ENCODE measurements at regions of chr22 and their contacts with region 1.

Region 1: GRCh38 chr22:22884010-22884887 is 3.4 kb upstream of the IGLL5 start:
- DNase-seq: no peak
- ATAC-seq: peak; percentile 52
- H3K4me3 Mint-ChIP-seq: peak overlapping the region; percentile 28
- H3K27ac Mint-ChIP-seq: peak overlapping the region; percentile 83
- H3K4me1 Mint-ChIP-seq: peaks cover 88% of the 10 kb centered on the region
- H3K27me3 Mint-ChIP-seq: peaks cover 5% of the 10 kb centered on the region
- CTCF ChIP-seq: peak; percentile 75

Region 2: DNA sequence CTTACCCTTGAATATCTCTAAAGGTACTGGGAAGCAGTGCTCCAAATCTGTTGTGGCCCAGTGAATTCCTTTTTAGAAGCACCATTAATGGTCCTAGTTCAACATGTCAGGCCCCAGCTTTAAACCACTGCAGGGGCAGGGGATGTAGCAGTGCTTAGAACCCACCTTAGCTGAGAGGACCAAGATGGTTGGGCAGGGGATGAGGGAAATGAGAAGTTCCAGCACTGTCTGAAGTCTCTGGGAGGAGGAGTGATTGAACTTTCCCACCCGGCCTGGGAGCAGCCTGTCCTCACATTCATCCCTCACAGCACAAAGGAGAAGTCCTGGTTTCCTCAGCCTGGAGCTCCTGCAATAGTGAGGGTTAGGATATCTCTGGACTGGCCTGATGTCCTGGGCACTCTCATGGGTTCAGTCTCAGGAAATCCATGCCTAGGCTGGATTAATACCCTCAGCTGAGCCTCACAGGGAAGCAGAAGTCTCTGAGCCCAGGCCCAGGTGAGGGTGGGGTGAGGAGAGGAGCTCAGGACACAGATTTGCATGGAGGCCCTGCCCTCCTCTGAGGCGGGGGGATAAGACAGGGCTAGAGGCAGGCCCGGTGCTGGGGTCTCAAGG is 296.6 kb before region 1 on chr22:
- CTCF ChIA-PET with region 1: interaction called, 13 read pairs
- POLR2A ChIA-PET with region 1: no interaction called
- intact Hi-C with region 1: loop called (anchors 2 kb)
- DNase-seq: no peak
- ATAC-seq: no peak
- H3K4me3 Mint-ChIP-seq: no peak overlapping the region
- H3K27ac Mint-ChIP-seq: no peak overlapping the region
- H3K4me1 Mint-ChIP-seq: peaks cover 42% of the 10 kb centered on the region
- H3K27me3 Mint-ChIP-seq: no peaks in the 10 kb centered on the region
- CTCF ChIP-seq: no peak

Region 3: DNA sequence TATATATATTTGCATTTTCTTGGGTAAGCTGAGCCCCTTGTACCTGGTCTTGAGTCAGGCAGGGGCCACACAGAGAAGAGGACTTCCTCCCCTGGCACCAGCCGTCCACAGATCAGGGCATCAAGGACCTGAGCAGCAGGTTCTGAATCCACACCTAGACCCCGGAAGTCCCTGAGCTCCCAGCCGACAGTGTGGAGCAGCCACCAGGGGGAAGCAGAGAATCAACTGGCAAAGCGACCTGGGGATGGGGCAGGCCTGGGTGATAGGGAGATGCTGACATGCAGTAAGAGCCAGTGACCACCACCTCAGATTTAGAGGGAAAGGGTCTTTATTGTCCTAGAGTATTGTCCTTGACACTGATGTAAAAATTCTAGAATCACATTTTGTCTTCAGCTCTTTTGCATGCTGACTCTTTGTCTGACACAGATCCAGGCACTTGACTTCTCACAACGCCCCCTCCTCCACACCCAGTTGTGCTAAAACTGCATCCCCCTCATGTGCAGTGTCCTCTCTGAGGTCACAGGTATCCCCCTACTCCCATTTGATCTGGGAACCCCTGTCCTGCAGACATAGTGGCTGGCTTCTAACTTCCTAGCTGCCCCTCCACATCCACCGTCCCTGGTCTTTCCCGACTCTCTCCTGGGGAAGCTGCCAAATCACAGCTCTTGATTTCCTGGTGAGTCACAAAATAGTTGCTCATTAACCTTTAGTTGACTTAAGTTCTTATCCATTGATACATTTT is 130.6 kb before region 1 on chr22:
- CTCF ChIA-PET with region 1: interaction called, 42 read pairs
- POLR2A ChIA-PET with region 1: no interaction called
- intact Hi-C with region 1: loop called (anchors 2 kb)
- DNase-seq: peak; percentile 55
- ATAC-seq: peak; percentile 89
- H3K4me3 Mint-ChIP-seq: no peak overlapping the region
- H3K27ac Mint-ChIP-seq: peak overlapping the region; percentile 24
- H3K4me1 Mint-ChIP-seq: peaks cover 26% of the 10 kb centered on the region
- H3K27me3 Mint-ChIP-seq: no peaks in the 10 kb centered on the region
- CTCF ChIP-seq: no peak

Region 4: DNA sequence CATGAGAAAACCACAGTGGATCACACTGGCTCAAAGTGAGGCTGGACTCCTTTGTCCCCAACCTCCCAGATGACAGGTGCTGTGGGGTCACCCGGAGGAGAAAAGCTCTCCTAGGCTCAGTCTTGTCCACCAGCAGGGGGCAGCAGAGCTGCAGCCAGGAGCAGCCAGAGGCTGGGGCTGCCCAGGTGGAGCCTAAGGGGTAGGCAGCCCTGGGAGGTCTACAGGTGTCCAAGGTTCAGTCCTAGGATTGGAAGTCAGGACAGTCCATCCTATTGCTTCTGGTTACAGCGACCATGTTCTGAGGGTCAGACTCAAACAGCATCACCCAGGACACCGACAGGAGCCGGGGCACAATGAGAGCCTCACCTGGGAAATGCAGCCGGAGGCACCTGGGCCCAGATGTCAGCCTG is 74.2 kb before region 1 on chr22:
- CTCF ChIA-PET with region 1: interaction called, 70 read pairs
- POLR2A ChIA-PET with region 1: interaction called, 17 read pairs
- intact Hi-C with region 1: loop called (anchors 1 kb)
- DNase-seq: peak; percentile 60
- ATAC-seq: peak; percentile 76
- H3K4me3 Mint-ChIP-seq: no peak overlapping the region
- H3K27ac Mint-ChIP-seq: no peak overlapping the region
- H3K4me1 Mint-ChIP-seq: peaks cover 21% of the 10 kb centered on the region
- H3K27me3 Mint-ChIP-seq: peaks cover 3% of the 10 kb centered on the region
- CTCF ChIP-seq: peak; percentile 80

Region 5: GRCh38 chr22:22865311-22866072 is 18.8 kb before region 1 on chr22:
- CTCF ChIA-PET with region 1: interaction called, 28 read pairs
- POLR2A ChIA-PET with region 1: interaction called, 11 read pairs
- intact Hi-C with region 1: loop called (anchors 1 kb)
- DNase-seq: no peak
- ATAC-seq: peak; percentile 83
- H3K4me3 Mint-ChIP-seq: no peak overlapping the region
- H3K27ac Mint-ChIP-seq: peak overlapping the region; percentile 36
- H3K4me1 Mint-ChIP-seq: peaks cover 48% of the 10 kb centered on the region
- H3K27me3 Mint-ChIP-seq: peaks cover 4% of the 10 kb centered on the region
- CTCF ChIP-seq: no peak

Region 6: GRCh38 chr22:22913989-22914388 is 29.7 kb after region 1 on chr22:
- CTCF ChIA-PET with region 1: interaction called, 5 read pairs
- POLR2A ChIA-PET with region 1: interaction called, 21 read pairs
- intact Hi-C with region 1: no loop called
- DNase-seq: no peak
- ATAC-seq: peak; percentile 73
- H3K4me3 Mint-ChIP-seq: peak overlapping the region; percentile 58
- H3K27ac Mint-ChIP-seq: peak overlapping the region; percentile 85
- H3K4me1 Mint-ChIP-seq: peaks cover 88% of the 10 kb centered on the region
- H3K27me3 Mint-ChIP-seq: no peaks in the 10 kb centered on the region
- CTCF ChIP-seq: no peak

Region 7: GRCh38 chr22:22976033-22976922 is 92.0 kb after region 1 on chr22:
- CTCF ChIA-PET with region 1: no interaction called
- POLR2A ChIA-PET with region 1: no interaction called
- intact Hi-C with region 1: no loop called
- DNase-seq: no peak
- ATAC-seq: no peak
- H3K4me3 Mint-ChIP-seq: no peak overlapping the region
- H3K27ac Mint-ChIP-seq: no peak overlapping the region
- H3K4me1 Mint-ChIP-seq: peaks cover under 1% of the 10 kb centered on the region
- H3K27me3 Mint-ChIP-seq: peaks cover 12% of the 10 kb centered on the region
- CTCF ChIP-seq: no peak

Region 8: GRCh38 chr22:23144932-23145873 is 261.0 kb after region 1 on chr22 and contains the start of gene RAB36:
- CTCF ChIA-PET with region 1: no interaction called
- POLR2A ChIA-PET with region 1: no interaction called
- intact Hi-C with region 1: loop called (anchors 2 kb)
- DNase-seq: peak; percentile 91
- ATAC-seq: peak; percentile 65
- H3K4me3 Mint-ChIP-seq: peak within 1 kb of the TSS; percentile 81
- H3K27ac Mint-ChIP-seq: peak within 1 kb of the TSS; percentile 86
- H3K4me1 Mint-ChIP-seq: peaks cover 56% of the 10 kb centered on the region
- H3K27me3 Mint-ChIP-seq: no peaks in the 10 kb centered on the region
- CTCF ChIP-seq: no peak
- total RNA-seq, gene RAB36: 1.7 and 2.1 TPM in 2 replicates

Measured in activated B cell treated with CpG ODN at 0.5 μM for 24 hours (primary cell).